Activated T-helper 1 cell treated with anti-CD3 and anti-CD28 coated beads, Interleukin-12 subunit alpha, Interleukin-12 subunit beta, Interleukin-2, Interleukin-4 antibody, amounts not matched to agents 30 ng/mL and 10 ng/mL and 1 ng/mL, durations not matched to agents 14 hours and 24 hours and 36 hours (primary cell): ENCODE measurements at regions of chr5 and their contacts with region 1.

Region 1: GRCh38 chr5:54944364-54944763 is 41.0 kb downstream of the ESM1 start:
- DNase-seq: peak; percentile 13
- H3K4me3 Mint-ChIP-seq: no peak overlapping the region
- H3K27ac Mint-ChIP-seq: no peak overlapping the region
- H3K4me1 Mint-ChIP-seq: peaks cover 22% of the 10 kb centered on the region
- H3K27me3 Mint-ChIP-seq: peaks cover 9% of the 10 kb centered on the region

Region 2: GRCh38 chr5:54990841-54991258 is 46.5 kb after region 1 on chr5:
- intact Hi-C with region 1: loop called (anchors 5 kb)
- DNase-seq: no peak
- H3K4me3 Mint-ChIP-seq: no peak overlapping the region
- H3K27ac Mint-ChIP-seq: no peak overlapping the region
- H3K4me1 Mint-ChIP-seq: peaks cover 43% of the 10 kb centered on the region
- H3K27me3 Mint-ChIP-seq: peaks cover 7% of the 10 kb centered on the region

Region 3: DNA sequence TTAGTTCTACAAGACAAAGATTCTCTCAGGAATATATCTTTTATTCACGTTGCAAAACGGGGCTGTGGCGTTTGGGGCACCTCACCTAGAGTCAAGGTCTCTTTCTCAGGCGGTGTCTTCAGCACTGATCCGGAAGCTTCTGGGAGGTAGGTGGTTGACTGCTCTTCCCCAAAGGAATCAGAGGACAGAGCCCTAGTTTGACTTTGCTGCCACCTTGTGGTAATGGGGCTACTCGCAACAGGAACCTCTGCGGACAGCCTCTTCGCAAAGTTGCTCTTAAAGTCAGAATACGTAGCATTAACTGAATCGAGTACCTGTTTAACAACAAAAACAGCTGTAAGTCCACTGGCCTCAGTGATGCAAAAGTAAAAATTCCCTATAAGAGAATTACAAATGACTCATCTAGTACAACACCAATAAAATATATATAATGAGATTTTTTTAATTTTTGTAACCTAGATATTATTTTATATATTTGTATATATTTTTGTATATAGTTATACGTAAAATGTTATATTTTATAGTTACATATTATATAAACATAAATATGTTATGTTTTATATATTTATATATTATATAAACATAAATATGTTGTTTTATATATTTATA is 202.3 kb after region 1 on chr5:
- intact Hi-C with region 1: loop called (anchors 1 kb)
- DNase-seq: peak; percentile 82
- H3K4me3 Mint-ChIP-seq: peak overlapping the region; percentile 20
- H3K27ac Mint-ChIP-seq: no peak overlapping the region
- H3K4me1 Mint-ChIP-seq: peaks cover 31% of the 10 kb centered on the region
- H3K27me3 Mint-ChIP-seq: peaks cover 17% of the 10 kb centered on the region

Region 4: DNA sequence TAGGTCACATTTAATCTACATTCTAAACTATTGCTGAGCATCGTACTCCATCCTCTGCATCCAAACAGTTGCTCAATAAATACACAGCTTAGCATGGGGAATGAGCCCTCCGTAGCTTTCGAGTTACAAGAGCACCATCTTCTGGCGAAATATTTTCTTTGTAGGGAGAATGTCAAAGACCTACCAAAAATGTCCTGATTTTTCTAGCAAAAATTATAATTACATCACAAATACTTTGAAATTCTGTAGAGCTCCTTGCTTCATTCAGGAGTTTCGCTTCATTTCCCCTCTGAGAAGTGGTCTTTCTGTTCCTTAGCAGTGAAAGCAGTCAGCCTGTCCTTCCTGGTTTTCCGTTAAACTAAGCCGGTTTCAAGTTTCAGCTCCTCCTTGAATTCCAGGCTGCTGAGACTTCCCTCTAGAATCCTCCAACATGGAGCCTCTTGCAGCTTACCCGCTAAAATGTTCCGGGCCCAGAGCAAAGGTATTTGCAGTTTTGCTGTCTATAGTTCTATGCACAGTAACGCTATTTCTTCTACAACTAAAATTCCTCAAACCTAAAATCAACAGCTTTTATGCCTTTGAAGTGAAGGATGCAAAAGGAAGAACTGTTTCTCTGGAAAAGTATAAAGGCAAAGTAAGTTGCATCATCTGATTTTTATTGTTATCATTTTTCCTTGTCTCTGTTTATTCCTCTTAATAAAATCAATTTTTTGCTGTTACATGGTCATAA is 215.6 kb after region 1 on chr5 and contains the start of gene GPX8:
- intact Hi-C with region 1: loop called (anchors 1 kb)
- DNase-seq: no peak
- H3K4me3 Mint-ChIP-seq: no peak within 1 kb of the TSS
- H3K27ac Mint-ChIP-seq: no peak within 1 kb of the TSS
- H3K4me1 Mint-ChIP-seq: peaks cover 8% of the 10 kb centered on the region
- H3K27me3 Mint-ChIP-seq: peaks cover 64% of the 10 kb centered on the region
- total RNA-seq, gene GPX8: not detected in 2 replicates

Region 5: GRCh38 chr5:55320571-55320970 is 376.2 kb after region 1 on chr5:
- intact Hi-C with region 1: no loop called
- DNase-seq: no peak
- H3K4me3 Mint-ChIP-seq: no peak overlapping the region
- H3K27ac Mint-ChIP-seq: no peak overlapping the region
- H3K4me1 Mint-ChIP-seq: peaks cover 30% of the 10 kb centered on the region
- H3K27me3 Mint-ChIP-seq: no peaks in the 10 kb centered on the region